ENCODE measurements at regions of chr7 and their contacts with region 1.

Region 1: DNA sequence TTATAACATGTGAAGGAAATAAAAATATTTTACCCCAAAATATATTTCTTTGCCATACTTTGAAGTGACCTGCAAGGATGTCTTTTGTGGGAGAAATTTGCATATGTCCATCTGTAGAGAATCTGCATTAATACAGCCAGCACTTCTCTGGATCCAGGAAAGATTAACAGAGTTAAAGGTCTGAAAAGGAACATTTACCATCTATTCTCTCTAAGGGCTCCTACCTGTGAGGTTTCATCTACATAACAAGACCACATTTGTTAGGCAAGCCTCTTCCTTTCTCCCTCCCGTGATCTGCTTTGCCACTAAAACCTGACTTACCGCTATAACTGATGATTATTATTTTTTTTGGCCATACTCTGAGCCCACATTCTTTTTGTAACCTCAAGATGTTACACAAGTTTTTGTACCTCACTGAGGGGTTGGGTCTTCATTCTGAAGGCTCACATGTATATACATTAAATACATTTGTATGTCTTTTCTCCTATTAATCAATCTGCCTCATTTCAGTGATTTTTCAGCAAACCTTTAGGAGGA is 129.4 kb downstream of the AKR1D1 start:
- DNase-seq: no peak

Region 2: DNA sequence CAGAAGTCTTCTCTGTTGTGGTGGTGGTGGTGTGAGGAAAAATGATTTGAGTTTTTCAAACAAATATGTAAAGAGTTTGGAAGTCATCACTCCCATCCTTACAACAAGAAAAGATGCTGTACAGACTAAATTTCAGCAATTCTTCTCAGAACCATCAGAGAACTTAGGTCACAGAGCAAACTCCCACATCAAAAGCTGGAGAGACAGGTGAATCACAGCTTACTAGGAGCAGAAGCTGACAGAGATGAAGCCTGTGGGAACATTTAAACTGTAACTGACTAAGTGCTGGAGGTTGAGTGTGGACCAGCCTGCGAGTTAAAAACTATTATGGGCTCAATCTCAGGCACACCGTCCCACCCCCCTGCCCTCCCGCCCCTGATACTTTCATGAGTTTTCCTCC is 32.1 kb before region 1 on chr7:
- CTCF ChIA-PET with region 1: interaction called, 10 read pairs
- POLR2A ChIA-PET with region 1: no interaction called
- DNase-seq: no peak

Region 3: DNA sequence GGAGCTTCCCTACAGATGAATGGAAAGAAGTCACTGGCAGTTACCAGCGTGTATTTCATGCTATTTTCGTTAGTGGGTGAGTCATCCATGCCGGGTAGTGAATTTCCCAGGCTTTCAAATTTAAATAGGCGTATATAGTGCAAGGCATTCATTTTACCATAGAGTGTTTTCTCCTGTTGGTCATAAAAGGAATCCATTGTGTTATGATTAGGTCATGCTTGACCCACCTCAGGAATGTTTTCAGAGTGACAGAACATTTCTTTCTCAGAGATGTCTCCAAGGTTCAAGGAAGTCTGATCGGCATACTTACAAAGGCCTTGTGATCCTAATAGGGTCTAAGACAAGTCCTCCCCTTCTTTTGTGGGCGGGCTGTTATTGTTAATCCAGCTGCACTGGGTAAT is 18.7 kb before region 1 on chr7:
- CTCF ChIA-PET with region 1: no interaction called
- POLR2A ChIA-PET with region 1: no interaction called
- DNase-seq: no peak